ENCODE measurements at regions of chr1 and their contacts with region 1.

Region 1: GRCh38 chr1:221886743-221887413 is 145.0 kb upstream of the DUSP10 start:
- DNase-seq: no peak
- ATAC-seq: no peak
- H3K4me3 ChIP-seq: no peak overlapping the region
- H3K27ac ChIP-seq: no peak overlapping the region
- H3K4me1 ChIP-seq: no peaks in the 10 kb centered on the region; the same call in 1 of the 2 replicates
- H3K27me3 ChIP-seq: no peaks in the 10 kb centered on the region
- CTCF ChIP-seq: no peak
- EP300 ChIP-seq: no peak
- POLR2A ChIP-seq: no peak
- RAD21 ChIP-seq: no peak

Region 2: GRCh38 chr1:220046052-220046930 is 1840.6 kb before region 1 on chr1 and contains the start of gene EPRS1:
- CTCF ChIA-PET with region 1: no interaction called
- POLR2A ChIA-PET with region 1: interaction called, 10 read pairs
- RAD21 ChIA-PET with region 1: no interaction called
- SMC1A ChIA-PET with region 1: no interaction called
- in situ Hi-C with region 1: no loop called
- intact Hi-C with region 1: no loop called
- DNase-seq: peak; percentile 98
- ATAC-seq: peak; percentile 98
- H3K4me3 ChIP-seq: peak within 1 kb of the TSS; percentile 81
- H3K27ac ChIP-seq: peak within 1 kb of the TSS; percentile 81
- H3K4me1 ChIP-seq: peaks cover 5% of the 10 kb centered on the region; the same call in 1 of the 2 replicates
- H3K27me3 ChIP-seq: no peaks in the 10 kb centered on the region
- CTCF ChIP-seq: peak; percentile 61 to 67 (median 66); a peak in 5 of 6 replicates
- EP300 ChIP-seq: no peak
- POLR2A ChIP-seq: peak; percentile 96
- RAD21 ChIP-seq: peak; percentile 38; the same call in 1 of the 2 replicates
- polyA plus RNA-seq, gene EPRS1: 94.6 to 104 TPM